ENCODE measurements at regions of chr5 and their contacts with region 1.

Region 1: DNA sequence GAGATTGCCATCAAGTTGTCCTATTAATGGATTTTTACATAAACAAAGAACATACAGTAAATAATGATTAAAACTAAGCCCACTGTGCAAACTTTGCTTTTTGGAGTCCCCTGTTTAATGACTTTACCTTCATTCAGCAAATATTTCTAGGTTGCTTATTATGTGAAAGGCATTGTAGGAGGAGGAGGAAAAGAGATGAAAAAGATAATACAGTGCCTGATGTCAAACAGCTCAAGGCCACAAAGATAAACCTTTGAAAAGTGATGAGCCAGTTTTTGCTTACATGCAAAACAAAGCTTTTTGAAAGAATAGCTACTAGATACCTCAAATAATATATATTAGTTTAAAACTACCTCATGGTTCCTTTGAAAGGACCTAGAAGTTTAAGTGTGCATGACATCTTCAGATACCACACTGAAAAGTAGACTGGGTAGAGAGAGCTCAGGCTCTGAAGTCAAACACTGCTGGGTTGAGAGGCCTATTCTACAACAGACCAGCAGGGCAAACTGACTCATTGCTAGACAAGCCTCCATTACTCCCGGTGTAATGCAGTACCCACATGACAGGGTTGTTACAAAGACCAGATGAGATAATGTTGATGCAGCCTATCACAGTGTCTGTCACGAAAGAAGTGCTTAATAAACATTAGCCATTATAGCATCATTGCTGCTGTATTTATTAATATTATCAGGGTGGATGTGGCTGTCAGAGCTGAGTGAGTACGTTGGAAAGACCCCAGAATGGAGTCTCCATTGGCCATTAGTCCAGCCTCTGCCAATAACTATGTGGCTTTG is 11.8 kb downstream of the DEPDC1B start:
- DNase-seq: peak; percentile 31 to 66 (median 41)
- H3K4me3 ChIP-seq: no peak overlapping the region
- H3K27ac ChIP-seq: no peak overlapping the region
- H3K4me1 ChIP-seq: no peaks in the 10 kb centered on the region
- H3K27me3 ChIP-seq: no peaks in the 10 kb centered on the region

Region 2: GRCh38 chr5:60568646-60569045 is 119.5 kb before region 1 on chr5:
- CTCF ChIA-PET with region 1: no interaction called
- POLR2A ChIA-PET with region 1: no interaction called
- DNase-seq: peak in 2 of 3 donors; percentile 26 to 28
- H3K4me3 ChIP-seq: no peak overlapping the region
- H3K27ac ChIP-seq: no peak overlapping the region
- H3K4me1 ChIP-seq: no peaks in the 10 kb centered on the region
- H3K27me3 ChIP-seq: no peaks in the 10 kb centered on the region

Region 3: DNA sequence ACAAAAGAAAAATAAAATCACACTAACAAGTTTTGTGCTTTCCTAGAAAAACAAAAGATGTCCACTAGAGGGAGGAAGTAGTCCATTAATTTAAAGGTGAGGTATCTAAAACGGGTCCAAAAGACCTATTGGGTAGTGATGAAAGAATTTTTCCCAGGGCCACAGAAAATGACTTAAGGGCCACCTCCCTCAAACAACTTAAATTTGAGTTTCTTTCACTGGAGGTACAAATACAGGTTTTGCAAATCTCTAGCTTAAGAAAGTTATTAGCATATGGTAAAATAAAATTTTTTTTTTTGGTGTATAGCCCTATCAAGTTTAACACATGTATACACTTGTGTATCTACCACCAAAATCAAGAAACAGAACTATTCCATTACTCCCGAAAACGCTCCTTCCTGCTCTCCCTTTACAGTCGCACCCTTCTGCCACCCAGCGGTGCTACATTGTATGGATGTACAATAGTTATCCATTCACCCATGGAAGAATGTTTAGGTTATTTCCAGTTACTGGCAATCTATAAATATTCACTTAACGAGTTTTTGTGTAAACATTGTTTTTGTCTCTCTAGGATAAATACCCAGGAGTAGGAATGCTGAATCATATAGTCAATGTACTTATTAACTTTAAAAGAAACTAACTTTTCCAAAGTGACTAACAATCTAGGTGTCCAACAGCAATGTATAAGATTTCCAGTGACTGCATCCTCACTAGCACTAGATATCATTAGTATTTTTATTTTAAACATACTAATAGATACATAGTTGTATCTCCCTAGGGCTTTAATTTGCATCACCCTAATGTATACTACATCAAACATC is 10.1 kb before region 1 on chr5:
- CTCF ChIA-PET with region 1: interaction called, 18 read pairs
- POLR2A ChIA-PET with region 1: no interaction called
- DNase-seq: peak; percentile 72 to 74 (median 73)
- H3K4me3 ChIP-seq: peak overlapping the region in 2 of 7 experiments; percentile 22 to 46
- H3K27ac ChIP-seq: no peak overlapping the region
- H3K4me1 ChIP-seq: peaks cover 0 to 8% (median 2%) of the 10 kb centered on the region in 4 experiments
- H3K27me3 ChIP-seq: no peaks in the 10 kb centered on the region

Measured in common myeloid progenitor, CD34-positive (primary cell).